ENCODE measurements at regions of chr17 and their contacts with region 1.

Region 1: DNA sequence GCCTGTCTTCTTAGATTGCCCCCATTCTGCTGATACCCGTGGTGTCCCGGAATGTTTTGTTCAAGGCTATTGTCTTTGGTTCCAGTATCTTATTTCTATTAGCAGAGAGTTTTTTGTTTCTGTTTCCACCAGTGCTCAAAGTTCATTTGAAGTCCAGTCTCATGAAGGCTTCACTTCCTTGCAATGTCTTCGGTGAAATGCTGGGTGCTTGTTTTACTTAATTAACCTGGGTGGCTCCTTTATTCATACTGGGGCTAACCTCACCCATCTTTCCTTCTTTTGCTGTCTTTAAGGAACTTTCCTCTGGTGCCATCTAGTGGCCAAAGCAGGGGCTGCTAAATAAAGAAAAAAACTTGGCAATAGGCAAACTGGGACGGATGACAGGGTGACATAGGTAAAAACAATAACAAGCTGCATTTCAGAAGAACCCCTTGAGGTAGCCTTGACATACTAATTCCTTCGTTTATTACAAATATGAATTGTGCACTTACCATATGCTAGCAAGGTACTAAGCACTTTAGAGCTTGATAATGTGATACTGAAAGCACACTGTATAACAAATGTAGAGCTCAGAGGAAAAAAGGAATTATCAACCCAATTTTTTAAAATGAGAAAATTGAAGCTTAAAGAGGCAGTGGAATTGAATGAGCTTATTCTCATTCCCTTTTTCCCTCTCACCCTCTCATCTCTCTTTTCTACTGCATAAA is 2.8 kb upstream of the SMIM36 start:
- DNase-seq: peak; percentile 73
- H3K4me3 ChIP-seq: no peak overlapping the region
- H3K27ac ChIP-seq: no peak overlapping the region
- H3K4me1 ChIP-seq: no peaks in the 10 kb centered on the region
- H3K27me3 ChIP-seq: no peaks in the 10 kb centered on the region
- CTCF ChIP-seq: peak; percentile 78 to 93 (median 84)
- POLR2A ChIP-seq: no peak

Region 2: GRCh38 chr17:54992797-54993639 is 521.0 kb before region 1 on chr17:
- intact Hi-C with region 1: loop called (anchors 5 kb)
- DNase-seq: peak; percentile 23
- H3K4me3 ChIP-seq: no peak overlapping the region
- H3K27ac ChIP-seq: no peak overlapping the region
- H3K4me1 ChIP-seq: no peaks in the 10 kb centered on the region
- H3K27me3 ChIP-seq: no peaks in the 10 kb centered on the region
- CTCF ChIP-seq: peak; percentile 26 to 66 (median 63)
- POLR2A ChIP-seq: no peak

Region 3: DNA sequence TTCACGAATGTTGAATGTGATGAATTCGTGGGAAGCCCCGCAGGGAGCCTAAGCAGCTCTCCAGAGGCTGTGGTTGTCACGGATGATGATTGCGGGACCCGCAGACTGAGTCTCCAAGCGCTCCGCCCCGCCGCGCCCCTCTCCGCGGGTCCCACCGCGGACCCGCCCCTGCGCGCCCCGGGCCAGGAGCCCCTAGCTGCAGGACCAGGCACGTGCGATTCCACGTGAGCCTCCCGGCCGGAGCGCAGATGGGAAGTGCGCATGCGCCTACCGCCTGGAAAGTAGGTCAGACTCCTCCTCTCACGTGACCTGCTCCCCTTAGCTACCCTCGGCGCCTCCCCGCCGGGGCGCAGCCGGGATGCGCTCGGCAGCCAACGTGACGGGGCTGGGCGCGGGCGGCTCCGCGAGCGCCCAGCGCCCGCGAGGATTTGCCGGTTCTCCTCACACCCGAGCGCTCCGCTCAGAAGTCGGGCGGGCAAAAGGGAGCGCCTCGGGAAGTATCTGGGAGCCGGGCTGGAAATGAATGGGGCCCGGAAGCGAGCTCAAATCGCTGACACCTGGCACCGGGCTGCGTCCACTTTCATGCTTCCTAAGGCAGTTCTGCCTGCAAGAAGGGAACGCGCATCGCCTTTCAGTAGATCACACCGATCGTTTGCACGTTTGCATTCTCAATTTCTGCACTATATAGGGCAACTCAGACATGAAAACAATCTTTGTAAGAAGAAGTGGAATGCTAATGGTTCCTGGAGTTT is 275.7 kb before region 1 on chr17:
- intact Hi-C with region 1: loop called (anchors 10 kb)
- DNase-seq: peak; percentile 94
- H3K4me3 ChIP-seq: peak overlapping the region; percentile 33
- H3K27ac ChIP-seq: peak overlapping the region; percentile 61 to 79
- H3K4me1 ChIP-seq: no peaks in the 10 kb centered on the region
- H3K27me3 ChIP-seq: no peaks in the 10 kb centered on the region
- CTCF ChIP-seq: peak in 2 of 4 experiments; percentile 30 to 33
- POLR2A ChIP-seq: peak; percentile 28

Region 4: GRCh38 chr17:55303701-55304145 is 210.3 kb before region 1 on chr17:
- intact Hi-C with region 1: loop called (anchors 10 kb)
- DNase-seq: no peak
- H3K4me3 ChIP-seq: no peak overlapping the region
- H3K27ac ChIP-seq: no peak overlapping the region
- H3K4me1 ChIP-seq: no peaks in the 10 kb centered on the region
- H3K27me3 ChIP-seq: no peaks in the 10 kb centered on the region
- CTCF ChIP-seq: no peak
- POLR2A ChIP-seq: no peak

Region 5: GRCh38 chr17:55356434-55357328 is 157.4 kb before region 1 on chr17:
- intact Hi-C with region 1: loop called (anchors 10 kb)
- DNase-seq: peak; percentile 62
- H3K4me3 ChIP-seq: no peak overlapping the region
- H3K27ac ChIP-seq: no peak overlapping the region
- H3K4me1 ChIP-seq: no peaks in the 10 kb centered on the region
- H3K27me3 ChIP-seq: no peaks in the 10 kb centered on the region
- CTCF ChIP-seq: peak; percentile 50 to 68 (median 59)
- POLR2A ChIP-seq: no peak

Region 6: GRCh38 chr17:55421179-55421934 is 92.7 kb before region 1 on chr17 and contains the start of gene MMD:
- intact Hi-C with region 1: loop called (anchors 5 kb)
- DNase-seq: peak; percentile 39
- H3K4me3 ChIP-seq: peak within 1 kb of the TSS; percentile 84 to 87
- H3K27ac ChIP-seq: peak within 1 kb of the TSS; percentile 84 to 85
- H3K4me1 ChIP-seq: no peaks in the 10 kb centered on the region
- H3K27me3 ChIP-seq: no peaks in the 10 kb centered on the region
- CTCF ChIP-seq: no peak
- POLR2A ChIP-seq: peak; percentile 12
- total RNA-seq, gene MMD: 8.7 to 55.0 TPM

Region 7: DNA sequence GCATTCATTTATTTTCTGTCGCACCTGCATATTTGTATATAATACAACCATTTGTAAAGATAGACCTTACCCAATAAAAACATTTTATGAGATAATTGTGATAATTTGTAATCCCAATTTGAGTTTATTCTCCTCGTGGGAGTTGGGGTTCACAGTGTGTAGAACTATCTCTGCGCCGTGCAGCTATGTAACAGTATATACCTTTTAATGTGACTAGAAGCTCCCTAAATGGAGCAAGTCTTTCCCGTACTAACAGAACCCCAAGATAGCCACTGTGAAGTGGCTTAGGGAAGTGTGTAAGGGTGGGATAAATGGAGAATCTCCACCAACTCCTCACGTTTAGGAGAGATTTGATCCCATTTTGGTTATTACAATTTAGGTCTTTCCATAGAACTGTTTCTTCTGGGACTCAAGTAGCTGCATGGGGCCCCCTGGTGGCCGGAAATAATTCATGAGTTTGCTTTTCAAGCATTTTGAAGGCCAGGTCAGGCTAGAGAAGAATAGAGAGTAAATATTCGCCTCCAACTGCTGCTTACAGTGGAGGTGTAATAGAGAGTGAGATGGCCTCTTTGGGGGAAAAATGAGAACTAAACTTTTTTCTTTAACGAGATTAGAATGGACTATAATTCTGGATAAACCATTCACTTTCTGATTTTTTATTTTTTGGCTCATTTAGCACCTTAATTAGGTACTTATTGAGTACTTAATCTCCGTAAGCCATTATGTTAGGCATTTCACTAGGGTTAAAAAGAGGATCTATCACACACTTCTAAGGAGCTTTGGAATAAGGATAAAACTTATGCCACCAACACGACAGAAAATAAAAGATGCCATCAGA is 204.1 kb after region 1 on chr17:
- intact Hi-C with region 1: no loop called
- DNase-seq: peak; percentile 70
- H3K4me3 ChIP-seq: no peak overlapping the region
- H3K27ac ChIP-seq: no peak overlapping the region
- H3K4me1 ChIP-seq: no peaks in the 10 kb centered on the region
- H3K27me3 ChIP-seq: peaks cover 2% of the 10 kb centered on the region
- CTCF ChIP-seq: peak; percentile 56 to 74 (median 68)
- POLR2A ChIP-seq: no peak